HEK293T (cell line): ENCODE measurements at regions of chr12 and their contacts with region 1.

Region 1: GRCh38 chr12:66169221-66170170 is at the start of gene TMBIM4:
- DNase-seq: peak; percentile 87

Region 2: DNA sequence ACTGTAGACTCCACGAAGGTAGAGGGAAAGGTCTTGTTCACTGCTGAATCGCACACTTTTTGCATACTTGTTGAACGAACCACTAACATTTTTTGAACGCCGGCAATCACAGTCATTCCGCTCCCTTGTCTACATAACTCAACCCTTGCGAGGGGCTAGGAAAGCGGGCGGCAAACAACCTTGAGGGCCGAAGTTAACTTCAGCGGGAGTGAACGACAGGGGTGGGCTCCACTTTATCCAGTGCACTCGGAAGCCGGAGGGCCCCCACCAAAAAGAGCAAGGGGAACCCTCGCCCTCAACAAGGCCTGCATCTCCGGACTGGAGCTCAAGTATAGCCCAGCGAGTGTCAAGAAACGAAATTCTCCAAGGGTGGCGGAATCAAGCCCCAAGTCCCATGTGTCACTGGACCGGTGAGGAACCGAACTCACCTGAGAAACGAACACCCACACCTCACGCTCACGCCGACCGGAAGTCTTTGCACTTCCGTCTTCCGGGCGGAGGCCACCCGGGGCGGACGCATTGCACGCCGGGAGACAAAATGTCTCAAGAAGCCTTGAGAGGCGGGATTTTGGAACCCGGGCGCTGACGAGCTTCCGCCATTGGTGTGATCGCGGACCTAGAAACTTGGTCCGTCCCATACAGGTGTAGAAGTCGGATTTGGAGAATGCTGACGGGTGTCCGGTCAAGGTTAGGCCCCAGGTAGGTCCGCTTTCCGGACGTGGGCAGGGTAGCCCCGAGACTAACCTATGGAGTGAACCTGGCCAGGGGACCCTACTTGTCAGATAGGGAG is 39.0 kb before region 1 on chr12 and contains the start of gene LLPH:
- CTCF ChIA-PET with region 1: no interaction called
- POLR2A ChIA-PET with region 1: interaction called, 23 read pairs
- DNase-seq: peak; percentile 93

Region 3: DNA sequence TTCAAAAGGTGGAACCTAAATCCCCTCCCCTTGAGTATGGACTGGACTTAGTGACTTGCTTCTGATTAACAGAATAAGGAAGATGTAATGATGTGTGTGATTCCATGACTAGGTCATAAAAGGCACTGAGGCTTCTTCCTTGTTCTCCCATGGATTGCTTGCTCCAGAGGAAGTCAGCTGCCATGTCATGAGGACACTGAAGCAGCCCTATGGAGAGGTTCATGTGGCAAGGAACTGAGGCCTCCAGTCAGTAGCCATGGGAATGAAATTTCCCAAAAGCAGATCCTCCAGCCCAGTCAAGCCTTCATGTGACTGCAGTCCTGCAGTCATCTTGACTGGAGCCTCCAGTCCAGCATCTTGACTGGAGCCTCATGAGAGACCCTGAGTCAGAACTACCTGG is 10.4 kb before region 1 on chr12:
- CTCF ChIA-PET with region 1: interaction called, 3 read pairs
- POLR2A ChIA-PET with region 1: interaction called, 20 read pairs
- DNase-seq: no peak

Region 4: GRCh38 chr12:66182956-66183355 is 13.5 kb after region 1 on chr12:
- CTCF ChIA-PET with region 1: interaction called, 3 read pairs
- POLR2A ChIA-PET with region 1: interaction called, 13 read pairs
- DNase-seq: no peak

Region 5: GRCh38 chr12:66190519-66191370 is 21.2 kb after region 1 on chr12:
- CTCF ChIA-PET with region 1: no interaction called
- POLR2A ChIA-PET with region 1: interaction called, 14 read pairs
- DNase-seq: no peak

Region 6: GRCh38 chr12:66235626-66236281 is 66.3 kb after region 1 on chr12:
- CTCF ChIA-PET with region 1: no interaction called
- POLR2A ChIA-PET with region 1: interaction called, 16 read pairs
- DNase-seq: peak; percentile 38

Region 7: GRCh38 chr12:66301944-66302826 is 132.7 kb after region 1 on chr12 and contains the start of gene HELB:
- CTCF ChIA-PET with region 1: no interaction called
- POLR2A ChIA-PET with region 1: interaction called, 10 read pairs
- DNase-seq: peak; percentile 95